HCT116 (cell line): ENCODE measurements at regions of chr15 and their contacts with region 1.

Region 1: DNA sequence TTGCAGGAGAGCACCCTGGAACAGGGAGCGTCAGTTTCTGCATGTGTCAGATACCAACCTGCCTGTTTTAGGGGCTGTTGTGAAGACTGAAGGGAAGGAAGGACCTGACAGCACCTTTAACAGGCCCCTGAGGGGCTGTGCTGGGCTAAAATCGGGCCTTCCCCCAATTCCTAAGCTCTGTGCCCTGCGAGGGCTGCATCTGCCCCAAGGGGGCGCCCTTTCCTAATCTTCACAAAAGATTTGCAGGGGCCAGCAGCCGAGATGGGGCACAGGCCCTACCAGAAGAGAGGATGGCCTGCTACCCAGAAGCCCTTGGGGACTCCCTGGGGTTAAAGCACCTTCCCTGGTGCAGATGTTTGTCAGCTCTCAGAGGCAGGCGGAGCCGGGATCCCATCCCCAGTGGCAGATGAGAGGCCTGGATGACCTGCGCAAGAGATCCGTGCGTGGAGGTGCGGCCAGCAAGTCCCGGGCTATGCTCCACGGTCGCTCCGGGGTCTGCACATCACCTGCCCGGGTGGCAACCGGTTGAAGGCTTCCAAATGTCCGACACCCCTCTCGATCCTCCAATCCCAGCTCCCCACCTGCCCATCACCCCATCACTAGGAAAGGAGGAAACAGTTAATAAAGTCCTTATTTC is 53.6 kb downstream of the RHCG start:
- DNase-seq: peak; percentile 44
- ATAC-seq: peak; percentile 91
- H3K4me3 ChIP-seq: no peak overlapping the region
- H3K27ac ChIP-seq: no peak overlapping the region
- H3K4me1 ChIP-seq: peaks cover 2 to 6% of the 10 kb centered on the region in 2 experiments; a peak in 2 of 4 replicates
- H3K27me3 ChIP-seq: no peaks in the 10 kb centered on the region
- CTCF ChIP-seq: peak; percentile 74 to 96 (median 89)
- POLR2A ChIP-seq: no peak
- RAD21 ChIP-seq: peak; percentile 72

Region 2: GRCh38 chr15:89430530-89431341 is 12.1 kb before region 1 on chr15:
- CTCF ChIA-PET with region 1: interaction called, 11 read pairs
- POLR2A ChIA-PET with region 1: interaction called, 4 read pairs
- RAD21 ChIA-PET with region 1: no interaction called
- intact Hi-C with region 1: no loop called
- DNase-seq: peak; percentile 57
- ATAC-seq: peak; percentile 97
- H3K4me3 ChIP-seq: peak overlapping the region; percentile 39 to 52
- H3K27ac ChIP-seq: no peak overlapping the region
- H3K4me1 ChIP-seq: peaks cover 4 to 13% of the 10 kb centered on the region in 2 experiments; a peak in 2 of 4 replicates
- H3K27me3 ChIP-seq: no peaks in the 10 kb centered on the region
- CTCF ChIP-seq: peak; percentile 89 to 95 (median 93)
- POLR2A ChIP-seq: no peak
- RAD21 ChIP-seq: peak; percentile 81

Region 3: GRCh38 chr15:89457097-89457496 is 14.3 kb after region 1 on chr15:
- CTCF ChIA-PET with region 1: interaction called, 14 read pairs
- POLR2A ChIA-PET with region 1: no interaction called
- RAD21 ChIA-PET with region 1: no interaction called
- intact Hi-C with region 1: no loop called
- DNase-seq: peak; percentile 64
- ATAC-seq: peak; percentile 96
- H3K4me3 ChIP-seq: 0 out of 4 replicates have a peak overlapping the region, but pooled peaks of 1 of the 2 experiments have one; percentile 3
- H3K27ac ChIP-seq: no peak overlapping the region
- H3K4me1 ChIP-seq: peaks cover 5 to 12% of the 10 kb centered on the region in 2 experiments; a peak in 3 of 4 replicates
- H3K27me3 ChIP-seq: no peaks in the 10 kb centered on the region
- CTCF ChIP-seq: no peak
- POLR2A ChIP-seq: no peak
- RAD21 ChIP-seq: no peak

Region 4: GRCh38 chr15:89472785-89473256 is 30.0 kb after region 1 on chr15:
- CTCF ChIA-PET with region 1: interaction called, 13 read pairs
- POLR2A ChIA-PET with region 1: no interaction called
- RAD21 ChIA-PET with region 1: no interaction called
- intact Hi-C with region 1: no loop called
- DNase-seq: peak; percentile 48
- ATAC-seq: peak; percentile 99
- H3K4me3 ChIP-seq: no peak overlapping the region
- H3K27ac ChIP-seq: no peak overlapping the region
- H3K4me1 ChIP-seq: no peaks in the 10 kb centered on the region; a peak in 1 of 4 replicates
- H3K27me3 ChIP-seq: peaks cover 8% of the 10 kb centered on the region; the same call in 1 of the 2 replicates
- CTCF ChIP-seq: peak; percentile 86 to 96 (median 93)
- POLR2A ChIP-seq: no peak
- RAD21 ChIP-seq: peak; percentile 94

Region 5: GRCh38 chr15:89556413-89557262 is 113.8 kb after region 1 on chr15:
- CTCF ChIA-PET with region 1: no interaction called
- POLR2A ChIA-PET with region 1: no interaction called
- RAD21 ChIA-PET with region 1: no interaction called
- intact Hi-C with region 1: loop called (anchors 2 kb)
- DNase-seq: peak; percentile 70
- ATAC-seq: peak; percentile 83
- H3K4me3 ChIP-seq: no peak overlapping the region
- H3K27ac ChIP-seq: no peak overlapping the region
- H3K4me1 ChIP-seq: peaks cover 0 to 5% of the 10 kb centered on the region in 2 experiments; a peak in 2 of 4 replicates
- H3K27me3 ChIP-seq: no peaks in the 10 kb centered on the region
- CTCF ChIP-seq: peak; percentile 72 to 87 (median 82); a peak in 5 of 6 replicates
- POLR2A ChIP-seq: no peak
- RAD21 ChIP-seq: peak; percentile 76